Activated T-helper 1 cell treated with anti-CD3 and anti-CD28 coated beads, Interleukin-12 subunit alpha, Interleukin-12 subunit beta, Interleukin-2, Interleukin-4 antibody, amounts not matched to agents 30 ng/mL and 10 ng/mL and 1 ng/mL, durations not matched to agents 14 hours and 24 hours and 36 hours (primary cell): ENCODE measurements at regions of chr11 and their contacts with region 1.

Region 1: GRCh38 chr11:34174412-34175041 is 69.1 kb downstream of the NAT10 start:
- DNase-seq: peak; percentile 71
- H3K4me3 Mint-ChIP-seq: peak overlapping the region; percentile 73
- H3K27ac Mint-ChIP-seq: no peak overlapping the region
- H3K4me1 Mint-ChIP-seq: peaks cover 22% of the 10 kb centered on the region
- H3K27me3 Mint-ChIP-seq: peaks cover 2% of the 10 kb centered on the region

Region 2: GRCh38 chr11:33996498-33997454 is 177.8 kb before region 1 on chr11:
- intact Hi-C with region 1: loop called (anchors 1 kb)
- DNase-seq: peak; percentile 67
- H3K4me3 Mint-ChIP-seq: peak overlapping the region; percentile 8
- H3K27ac Mint-ChIP-seq: no peak overlapping the region
- H3K4me1 Mint-ChIP-seq: peaks cover 12% of the 10 kb centered on the region
- H3K27me3 Mint-ChIP-seq: peaks cover 46% of the 10 kb centered on the region

Region 3: GRCh38 chr11:34214961-34215805 is 40.7 kb after region 1 on chr11:
- intact Hi-C with region 1: loop called (anchors 2 kb)
- DNase-seq: peak; percentile 19
- H3K4me3 Mint-ChIP-seq: peak overlapping the region; percentile 20
- H3K27ac Mint-ChIP-seq: peak overlapping the region; percentile 78
- H3K4me1 Mint-ChIP-seq: peaks cover 15% of the 10 kb centered on the region
- H3K27me3 Mint-ChIP-seq: peaks cover 13% of the 10 kb centered on the region

Region 4: DNA sequence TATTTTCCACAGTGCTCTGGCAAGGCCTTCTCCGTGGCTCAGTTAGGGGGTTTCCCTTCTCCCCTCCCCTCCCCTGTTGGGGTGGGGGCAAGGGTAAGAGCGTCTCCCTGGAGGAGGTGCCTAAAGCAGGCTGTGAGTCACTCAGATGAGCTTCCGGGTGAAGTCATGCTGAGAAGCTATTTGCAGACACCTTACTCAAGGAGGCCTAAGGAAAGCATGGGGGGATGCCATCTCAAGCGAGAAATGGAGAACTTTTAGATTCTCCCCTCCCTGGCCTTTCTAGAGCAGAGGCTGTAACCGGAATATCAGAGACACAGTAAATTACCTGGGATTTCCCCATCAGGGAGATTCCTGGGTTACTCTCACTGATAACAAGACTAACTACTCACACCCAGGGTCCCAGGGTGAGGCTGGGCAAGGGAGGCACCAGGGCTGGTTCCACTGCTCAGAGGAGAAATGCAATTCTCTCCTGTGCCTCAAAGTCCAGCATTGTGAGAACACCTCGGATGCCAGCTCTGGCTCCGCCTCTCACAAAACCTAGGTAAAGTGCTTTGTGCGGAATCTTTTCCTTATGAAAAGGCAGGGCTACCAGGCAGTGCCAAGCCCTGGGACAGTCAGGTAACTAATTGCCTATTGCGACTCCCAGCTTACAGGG is 59.7 kb after region 1 on chr11:
- intact Hi-C with region 1: loop called (anchors 1 kb)
- DNase-seq: peak; percentile 80
- H3K4me3 Mint-ChIP-seq: peak overlapping the region; percentile 50
- H3K27ac Mint-ChIP-seq: peak overlapping the region; percentile 85
- H3K4me1 Mint-ChIP-seq: peaks cover 61% of the 10 kb centered on the region
- H3K27me3 Mint-ChIP-seq: peaks cover 12% of the 10 kb centered on the region

Region 5: DNA sequence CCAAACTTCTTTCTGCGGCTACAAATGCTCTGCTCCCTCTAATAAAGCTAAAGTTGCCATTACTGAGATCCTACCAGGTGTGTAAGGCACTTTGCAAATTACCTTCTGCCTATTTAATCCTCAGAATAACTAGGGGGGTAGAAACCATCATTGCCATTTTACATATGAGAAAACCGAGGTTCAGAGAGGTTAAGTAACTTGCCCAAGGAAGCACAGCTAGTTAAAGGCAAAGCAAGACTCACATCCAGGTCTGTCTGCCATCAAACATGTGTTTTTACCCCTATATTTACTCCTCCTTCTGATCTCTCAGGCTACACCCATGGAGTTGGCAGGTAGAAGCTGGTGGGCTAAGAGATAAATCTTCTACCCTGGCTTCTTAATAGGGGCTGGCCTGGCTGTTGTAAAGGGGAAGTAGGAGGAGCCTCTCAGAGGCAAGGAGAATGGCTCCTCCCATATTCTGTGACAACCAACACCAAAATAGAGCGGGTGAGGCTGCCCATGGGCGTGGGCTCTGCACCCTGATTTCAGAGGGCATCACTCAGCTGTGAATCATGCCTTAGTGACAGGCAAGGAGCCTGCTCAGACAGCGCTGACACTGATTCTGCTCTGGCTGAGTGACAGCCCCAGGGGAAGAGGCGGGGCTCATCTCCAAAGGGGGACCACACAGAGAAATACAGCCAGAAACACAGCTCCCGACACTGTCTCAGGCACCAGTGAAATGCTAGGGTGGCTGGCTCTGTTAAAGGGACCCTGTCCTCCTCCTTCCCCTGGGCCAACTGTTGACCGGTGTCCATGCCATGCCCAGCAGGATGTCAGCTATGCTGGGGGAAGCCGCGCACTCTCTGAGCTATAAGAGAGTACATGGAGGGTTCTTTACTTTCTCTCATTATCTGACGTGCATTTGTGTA is 76.5 kb after region 1 on chr11:
- intact Hi-C with region 1: loop called (anchors 1 kb)
- DNase-seq: peak; percentile 38
- H3K4me3 Mint-ChIP-seq: peak overlapping the region; percentile 52
- H3K27ac Mint-ChIP-seq: peak overlapping the region; percentile 6
- H3K4me1 Mint-ChIP-seq: peaks cover 63% of the 10 kb centered on the region
- H3K27me3 Mint-ChIP-seq: peaks cover 13% of the 10 kb centered on the region

Region 6: GRCh38 chr11:34427186-34427805 is 252.8 kb after region 1 on chr11:
- intact Hi-C with region 1: no loop called
- DNase-seq: no peak
- H3K4me3 Mint-ChIP-seq: no peak overlapping the region
- H3K27ac Mint-ChIP-seq: no peak overlapping the region
- H3K4me1 Mint-ChIP-seq: no peaks in the 10 kb centered on the region
- H3K27me3 Mint-ChIP-seq: peaks cover 13% of the 10 kb centered on the region

Region 7: DNA sequence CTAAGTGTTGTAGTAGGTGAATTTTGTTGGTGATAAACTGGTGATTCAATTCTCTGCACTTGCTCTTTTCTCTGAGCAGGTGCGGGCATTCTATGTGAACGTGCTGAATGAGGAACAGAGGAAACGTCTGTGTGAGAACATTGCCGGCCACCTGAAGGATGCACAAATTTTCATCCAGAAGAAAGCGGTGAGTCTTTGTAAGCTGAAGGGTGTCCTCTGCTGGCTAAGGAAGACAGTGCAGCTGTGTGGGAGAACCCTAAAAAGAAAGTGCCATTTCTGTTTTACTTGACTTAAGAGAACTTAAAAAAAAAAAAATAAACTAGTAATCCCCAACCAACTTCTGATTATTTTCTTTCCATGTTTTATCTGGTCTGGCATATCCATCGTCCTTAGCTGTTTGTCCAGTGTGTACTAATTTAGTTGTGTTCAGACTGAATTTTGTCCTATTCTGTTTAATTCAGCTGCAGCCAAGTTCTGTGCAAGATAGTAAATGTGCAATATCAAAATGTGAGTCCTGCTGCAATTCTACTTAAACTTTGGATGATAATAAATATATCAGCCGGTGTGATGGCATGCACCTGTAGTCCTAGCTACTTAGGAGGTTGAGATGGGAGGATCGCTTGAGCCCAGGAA is 293.8 kb after region 1 on chr11:
- intact Hi-C with region 1: loop called (anchors 1 kb)
- DNase-seq: peak; percentile 22
- H3K4me3 Mint-ChIP-seq: no peak overlapping the region
- H3K27ac Mint-ChIP-seq: no peak overlapping the region
- H3K4me1 Mint-ChIP-seq: peaks cover 6% of the 10 kb centered on the region
- H3K27me3 Mint-ChIP-seq: no peaks in the 10 kb centered on the region

Region 8: GRCh38 chr11:34492806-34493414 is 318.4 kb after region 1 on chr11:
- intact Hi-C with region 1: loop called (anchors 2 kb)
- DNase-seq: no peak
- H3K4me3 Mint-ChIP-seq: no peak overlapping the region
- H3K27ac Mint-ChIP-seq: no peak overlapping the region
- H3K4me1 Mint-ChIP-seq: no peaks in the 10 kb centered on the region
- H3K27me3 Mint-ChIP-seq: peaks cover 3% of the 10 kb centered on the region

Region 9: GRCh38 chr11:34537656-34538055 is 363.1 kb after region 1 on chr11:
- intact Hi-C with region 1: no loop called
- DNase-seq: no peak
- H3K4me3 Mint-ChIP-seq: no peak overlapping the region
- H3K27ac Mint-ChIP-seq: no peak overlapping the region
- H3K4me1 Mint-ChIP-seq: no peaks in the 10 kb centered on the region
- H3K27me3 Mint-ChIP-seq: peaks cover 11% of the 10 kb centered on the region